Posterior vena cava (tissue), 2 donors: ENCODE measurements at regions of chr5 and their contacts with region 1.

Region 1: GRCh38 chr5:135332519-135333150 is 66.4 kb downstream of the MACROH2A1 start:
- DNase-seq: no peak

Region 2: DNA sequence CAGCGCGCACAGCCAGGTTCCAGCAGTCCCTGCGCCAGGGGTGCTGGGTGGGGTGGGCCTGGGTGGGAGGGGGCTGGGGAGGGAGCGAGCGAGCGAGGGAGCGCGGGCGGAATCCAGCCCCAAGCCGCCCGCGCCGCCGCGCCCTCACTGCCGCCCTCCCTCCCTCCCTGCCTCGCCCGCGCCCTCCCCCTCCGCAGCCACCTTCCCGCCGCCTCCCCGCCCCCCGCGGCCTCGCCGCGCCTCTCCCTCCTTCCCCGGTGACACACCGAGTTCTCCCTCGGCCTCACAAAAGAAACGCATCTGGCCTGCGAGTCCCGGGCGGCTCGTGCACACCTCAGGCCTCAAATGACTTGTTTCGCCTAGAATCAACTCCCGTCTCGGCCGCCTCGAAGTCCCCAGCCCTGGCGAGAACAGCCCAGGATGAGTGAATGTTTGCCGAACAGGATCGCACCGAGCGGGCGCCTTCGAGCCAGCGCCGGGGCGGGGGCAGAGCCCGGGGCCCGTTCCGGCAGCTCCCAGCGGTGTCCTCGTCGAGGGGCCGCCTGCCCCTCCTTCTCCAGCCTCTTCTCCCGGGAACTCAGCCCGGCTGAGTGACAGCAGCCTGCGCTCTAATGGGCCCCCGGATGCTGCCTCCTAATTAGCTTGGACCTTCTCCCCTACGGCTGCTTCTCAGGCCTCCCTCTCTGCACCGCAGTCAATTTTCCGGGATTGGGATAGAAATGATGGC is 298.2 kb before region 1 on chr5:
- intact Hi-C with region 1: loop called in 1 of 2 experiments (anchors 10 kb)
- DNase-seq: no peak

Region 3: GRCh38 chr5:135116160-135116561 is 216.5 kb before region 1 on chr5:
- intact Hi-C with region 1: no loop called
- DNase-seq: no peak

Region 4: DNA sequence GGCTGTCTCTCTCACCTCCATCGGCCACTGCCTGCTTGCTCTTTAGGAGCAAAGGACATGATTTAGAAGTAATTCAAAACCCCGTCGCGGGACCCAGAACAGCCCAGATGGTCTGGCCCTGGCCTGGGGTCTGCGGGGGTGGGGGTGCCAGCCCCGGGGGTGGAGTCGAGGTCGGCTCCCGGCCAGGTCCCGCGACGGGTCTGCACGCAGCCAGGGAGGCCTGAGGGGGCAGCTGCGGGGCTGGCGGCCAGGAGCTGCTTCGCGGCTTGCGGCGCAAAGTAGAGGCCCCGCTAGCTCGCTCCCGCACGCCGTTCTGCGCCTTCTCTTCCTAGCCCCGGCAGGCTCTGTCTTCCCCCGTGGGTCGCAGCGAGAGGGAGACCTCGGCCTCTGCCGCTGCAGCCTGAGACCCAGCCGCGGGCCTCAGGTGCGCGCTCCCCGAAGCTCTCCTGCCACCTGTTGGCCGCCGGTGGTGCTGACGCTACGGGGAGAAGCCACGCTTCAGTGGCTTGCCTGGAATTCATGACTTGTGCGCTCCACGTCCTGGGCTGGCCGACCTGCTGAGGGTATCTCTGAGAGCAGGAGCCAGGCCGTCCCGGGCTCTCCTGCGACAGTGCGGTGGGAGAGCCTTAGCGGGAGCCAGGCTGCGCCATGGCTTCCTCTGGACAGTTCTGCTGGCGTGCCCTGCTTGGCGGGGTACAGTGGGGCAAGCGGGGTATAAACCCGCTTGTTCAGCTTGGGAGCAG is 141.4 kb before region 1 on chr5:
- intact Hi-C with region 1: loop called (anchors 5 kb)
- DNase-seq: peak; percentile 91

Region 5: GRCh38 chr5:135398853-135399523 is 66.4 kb after region 1 on chr5 and contains the start of gene MACROH2A1:
- intact Hi-C with region 1: no loop called
- DNase-seq: peak; percentile 97
- total RNA-seq, gene MACROH2A1: 98.0 to 99.6 TPM